Ascending aorta (tissue), 2 donors: ENCODE measurements at regions of chr11 and their contacts with region 1.

Region 1: DNA sequence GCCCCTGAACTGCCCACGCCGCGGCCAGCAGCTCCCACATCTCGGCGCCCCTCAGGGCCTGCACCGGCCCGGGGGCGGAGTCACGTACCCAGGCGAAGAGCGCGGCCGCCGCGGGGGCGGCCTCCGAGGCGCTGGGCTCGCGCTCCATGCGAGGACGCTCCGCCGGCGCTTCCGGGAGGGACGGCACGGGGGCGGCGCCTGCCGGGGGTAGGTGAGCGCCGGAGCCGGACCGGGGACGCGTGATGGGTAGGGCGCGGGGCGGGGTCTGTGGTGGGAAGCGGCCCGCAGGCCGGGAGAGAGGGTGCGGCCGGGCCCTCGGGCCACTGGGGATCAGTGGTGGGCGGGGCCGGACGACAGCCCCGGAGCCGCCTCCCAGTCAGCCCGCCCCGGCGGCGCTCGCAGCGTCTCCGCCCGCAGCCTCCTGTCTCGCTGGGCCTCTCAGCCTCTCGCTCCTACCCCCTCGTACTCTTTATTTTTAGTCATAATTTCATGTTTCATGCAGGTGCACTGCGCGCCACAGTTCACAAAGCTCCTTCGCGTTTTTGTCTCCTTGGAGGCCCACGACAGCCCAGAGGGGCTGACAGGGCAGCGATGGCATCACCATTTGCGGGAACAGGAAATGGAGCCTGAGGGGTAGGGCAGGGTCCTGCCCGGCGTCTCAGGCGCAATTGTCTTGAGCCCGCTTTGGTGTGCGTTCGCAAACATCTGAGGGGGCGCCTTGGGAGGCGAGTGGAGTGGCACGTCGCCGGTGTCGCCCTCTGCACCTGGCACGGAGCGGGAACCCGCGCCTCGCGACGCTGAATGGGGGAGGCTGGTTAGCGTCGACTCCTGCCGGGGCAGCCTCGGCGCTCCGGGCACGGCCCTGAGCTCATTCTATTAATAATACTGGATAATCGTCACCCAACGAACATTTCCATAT is at the start of gene SERGEF:
- DNase-seq: peak; percentile 74 to 96
- H3K4me3 ChIP-seq: peak within 1 kb of the TSS; percentile 76 to 97
- H3K27ac ChIP-seq: peak within 1 kb of the TSS; percentile 93 to 98
- H3K4me1 ChIP-seq: no peaks in the 10 kb centered on the region
- H3K27me3 ChIP-seq: no peaks in the 10 kb centered on the region
- CTCF ChIP-seq: peak in 2 of 3 experiments; percentile 9 to 20
- total RNA-seq, gene SERGEF: 13.6 TPM

Region 2: GRCh38 chr11:18046116-18046777 is 33.1 kb after region 1 on chr11 and contains the start of gene TPH1:
- intact Hi-C with region 1: loop called (anchors 2 kb)
- DNase-seq: peak; percentile 12 to 83
- H3K4me3 ChIP-seq: peak within 1 kb of the TSS; percentile 48 to 67
- H3K27ac ChIP-seq: peak within 1 kb of the TSS; percentile 77 to 80
- H3K4me1 ChIP-seq: no peaks in the 10 kb centered on the region
- H3K27me3 ChIP-seq: no peaks in the 10 kb centered on the region
- CTCF ChIP-seq: no peak
- total RNA-seq, gene TPH1: 1.8 TPM

Region 3: DNA sequence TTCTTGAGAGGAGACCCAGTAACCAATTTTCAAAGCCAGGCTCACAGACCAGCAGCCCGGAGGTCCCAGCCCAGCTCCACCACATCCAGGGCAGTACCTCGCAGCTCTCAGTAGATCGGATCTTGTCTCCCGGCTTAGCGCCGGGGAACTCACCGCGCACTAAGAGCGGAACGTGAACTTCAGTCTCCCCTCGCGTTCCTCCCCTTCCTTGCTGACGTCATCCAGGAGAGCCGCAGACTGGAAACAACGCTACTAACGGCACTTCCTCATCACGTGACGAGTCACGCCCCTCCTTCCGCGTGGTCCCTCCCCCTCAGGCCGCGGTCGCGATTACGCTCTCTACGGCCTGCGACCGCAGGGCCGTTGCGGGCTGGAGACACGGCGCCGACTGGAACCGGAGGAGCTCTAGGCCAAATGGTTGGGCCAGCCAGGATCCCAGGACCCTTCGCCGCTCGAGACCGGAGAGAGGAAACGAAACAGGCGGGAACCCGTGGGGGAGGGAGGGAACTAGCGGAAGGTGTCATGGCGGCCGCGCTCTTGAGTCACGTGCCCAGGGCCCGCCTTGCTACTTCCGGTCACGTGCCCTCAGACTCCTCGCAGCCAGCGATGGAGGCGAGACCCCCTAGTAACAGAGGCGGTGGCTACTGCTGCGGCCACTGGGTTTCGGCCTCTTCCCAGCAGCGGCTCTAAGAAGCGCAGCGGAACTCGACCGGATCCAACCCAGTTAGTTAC is 309.0 kb after region 1 on chr11 and contains the starts of genes GTF2H1 and HPS5:
- intact Hi-C with region 1: loop called (anchors 2 kb)
- DNase-seq: peak; percentile 87 to 98
- H3K4me3 ChIP-seq: peak within 1 kb of the TSS; percentile 65 to 93
- H3K27ac ChIP-seq: peak within 1 kb of the TSS; percentile 93 to 97
- H3K4me1 ChIP-seq: peaks cover 17 to 29% of the 10 kb centered on the region in 2 donors
- H3K27me3 ChIP-seq: no peaks in the 10 kb centered on the region
- CTCF ChIP-seq: no peak
- total RNA-seq, gene GTF2H1: 33.7 TPM
- total RNA-seq, gene HPS5: 31.7 TPM

Region 4: GRCh38 chr11:18588297-18589252 is 575.5 kb after region 1 on chr11 and contains the start of gene UEVLD:
- intact Hi-C with region 1: loop called (anchors 5 kb)
- DNase-seq: peak; percentile 33 to 94
- H3K4me3 ChIP-seq: peak within 1 kb of the TSS; percentile 69 to 97
- H3K27ac ChIP-seq: peak within 1 kb of the TSS; percentile 75 to 90
- H3K4me1 ChIP-seq: peaks cover 8 to 21% of the 10 kb centered on the region in 2 donors
- H3K27me3 ChIP-seq: no peaks in the 10 kb centered on the region
- CTCF ChIP-seq: no peak
- total RNA-seq, gene UEVLD: 10.1 TPM